Mammary epithelial cell (primary cell): ENCODE measurements at regions of chr20 and their contacts with region 1.

Region 1: DNA sequence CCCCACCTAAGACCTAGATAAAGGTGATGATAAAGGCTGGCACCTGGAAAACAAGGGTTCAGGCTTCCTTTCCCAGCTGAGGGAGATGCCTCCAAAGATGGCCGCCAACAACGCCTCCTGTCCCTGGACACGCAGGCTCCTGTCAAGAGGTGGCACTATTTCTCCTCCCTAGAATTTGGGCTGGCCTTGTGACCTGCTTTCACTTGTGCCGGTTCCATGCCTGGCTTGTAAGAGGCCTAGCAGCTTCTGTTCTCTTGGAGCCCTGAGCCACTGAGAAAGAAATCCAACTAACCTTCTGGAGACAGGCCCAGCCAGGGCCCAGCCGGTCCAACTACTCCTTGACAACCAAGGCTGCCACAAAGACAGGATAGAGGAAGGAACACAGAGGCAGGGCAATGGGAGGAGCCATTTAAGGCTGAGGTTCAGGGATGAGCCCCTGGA is 60.2 kb upstream of the RALY start:
- DNase-seq: peak; percentile 61
- H3K4me3 ChIP-seq: no peak overlapping the region
- H3K27ac ChIP-seq: no peak overlapping the region
- H3K4me1 ChIP-seq: no peaks in the 10 kb centered on the region
- H3K27me3 ChIP-seq: no peaks in the 10 kb centered on the region
- CTCF ChIP-seq: peak; percentile 81 to 88

Region 2: GRCh38 chr20:33862709-33863403 is 70.6 kb before region 1 on chr20:
- CTCF ChIA-PET with region 1: no interaction called
- dilution Hi-C with region 1: no loop called
- in situ Hi-C with region 1: no loop called
- intact Hi-C with region 1: loop called (anchors 5 kb)
- DNase-seq: no peak
- H3K4me3 ChIP-seq: no peak overlapping the region
- H3K27ac ChIP-seq: no peak overlapping the region
- H3K4me1 ChIP-seq: peaks cover 4% of the 10 kb centered on the region
- H3K27me3 ChIP-seq: no peaks in the 10 kb centered on the region
- CTCF ChIP-seq: peak; percentile 58 to 81

Region 3: GRCh38 chr20:33984182-33984719 is 50.8 kb after region 1 on chr20:
- CTCF ChIA-PET with region 1: no interaction called
- dilution Hi-C with region 1: no loop called
- in situ Hi-C with region 1: no loop called
- intact Hi-C with region 1: no loop called
- DNase-seq: no peak
- H3K4me3 ChIP-seq: no peak overlapping the region
- H3K27ac ChIP-seq: no peak overlapping the region
- H3K4me1 ChIP-seq: no peaks in the 10 kb centered on the region
- H3K27me3 ChIP-seq: no peaks in the 10 kb centered on the region
- CTCF ChIP-seq: no peak

Region 4: DNA sequence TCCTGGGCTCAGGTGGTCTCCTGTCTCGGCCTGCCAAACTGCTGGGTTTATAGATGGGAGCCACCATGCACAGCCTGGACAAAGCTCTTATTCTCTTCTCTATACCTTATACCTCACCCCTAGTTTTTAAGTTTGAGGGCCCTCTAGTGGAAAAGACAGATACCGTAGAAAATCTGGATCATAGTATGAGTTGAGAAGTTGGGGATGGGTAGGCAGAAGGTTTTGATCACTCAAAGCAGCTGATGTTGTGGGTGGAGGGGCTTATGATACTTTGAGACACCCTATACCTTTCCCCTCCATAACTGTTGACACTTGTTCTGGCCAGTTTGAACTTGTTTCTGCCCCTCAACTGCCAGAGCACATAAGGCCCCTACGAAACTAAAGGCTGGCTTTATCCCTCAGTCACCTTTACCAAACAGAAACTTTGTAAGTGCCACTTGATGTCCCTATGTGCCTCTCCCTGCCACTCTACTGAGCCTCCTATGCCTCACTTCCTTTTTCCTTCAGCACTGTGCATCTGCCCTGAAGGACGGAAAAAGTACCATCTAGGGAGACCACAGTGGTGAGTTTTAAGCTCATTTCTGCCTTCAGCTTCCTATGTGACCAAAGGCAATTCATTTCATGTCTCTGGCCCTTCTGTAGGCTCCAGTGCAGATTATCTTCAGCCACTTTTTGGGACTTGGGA is 88.8 kb after region 1 on chr20:
- CTCF ChIA-PET with region 1: no interaction called
- dilution Hi-C with region 1: no loop called
- in situ Hi-C with region 1: no loop called
- intact Hi-C with region 1: loop called (anchors 1 kb)
- DNase-seq: peak; percentile 15
- H3K4me3 ChIP-seq: no peak overlapping the region
- H3K27ac ChIP-seq: no peak overlapping the region
- H3K4me1 ChIP-seq: peaks cover 61% of the 10 kb centered on the region
- H3K27me3 ChIP-seq: no peaks in the 10 kb centered on the region
- CTCF ChIP-seq: peak; percentile 25 to 38

Region 5: GRCh38 chr20:34129518-34130162 is 196.2 kb after region 1 on chr20:
- CTCF ChIA-PET with region 1: no interaction called
- dilution Hi-C with region 1: no loop called
- in situ Hi-C with region 1: no loop called
- intact Hi-C with region 1: loop called (anchors 1 kb)
- DNase-seq: peak; percentile 64
- H3K4me3 ChIP-seq: no peak overlapping the region
- H3K27ac ChIP-seq: no peak overlapping the region
- H3K4me1 ChIP-seq: peaks cover under 1% of the 10 kb centered on the region
- H3K27me3 ChIP-seq: no peaks in the 10 kb centered on the region
- CTCF ChIP-seq: peak; percentile 83 to 85